ENCODE measurements at regions of chr16 and their contacts with region 1.

Region 1: DNA sequence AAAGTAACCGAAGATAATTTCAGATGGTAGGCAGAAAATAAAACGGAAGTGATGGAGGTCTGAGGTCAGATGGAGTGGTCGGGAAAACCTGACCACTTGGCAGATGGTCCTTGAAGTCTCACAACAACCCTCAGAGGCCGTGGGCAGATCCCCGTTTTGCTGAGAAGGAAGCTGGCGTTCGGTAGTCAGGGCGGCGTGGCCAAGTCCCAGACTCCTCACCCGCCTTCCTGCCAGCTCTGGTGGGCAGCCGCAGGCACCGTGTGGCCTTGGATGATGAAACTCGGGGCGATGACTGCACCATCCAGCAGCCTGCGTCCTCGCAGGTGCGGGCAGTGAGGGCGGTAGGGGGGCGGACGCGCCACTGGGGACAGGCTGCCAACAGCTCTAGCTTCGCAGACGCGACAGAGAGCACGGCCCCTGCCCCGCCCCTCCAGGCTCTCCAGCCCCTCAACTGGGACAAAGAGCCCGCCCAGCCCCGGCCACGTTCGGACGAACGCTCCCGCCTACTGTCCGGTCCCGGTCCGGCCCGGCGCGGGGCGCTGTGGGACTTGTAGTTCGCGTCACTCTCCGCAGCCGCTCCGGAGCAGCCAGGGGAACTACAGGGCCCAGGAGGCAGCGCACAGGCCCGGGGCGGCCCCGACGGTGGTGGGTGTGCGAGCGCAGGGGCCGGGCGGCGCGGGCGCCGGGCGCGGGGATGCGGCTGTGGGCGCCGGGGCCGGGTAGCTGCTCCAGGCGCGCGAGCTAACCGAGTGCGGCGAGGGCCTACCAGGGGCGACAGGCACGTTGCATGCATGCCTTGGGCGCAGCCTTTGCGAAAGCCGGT is at the start of gene GPT2:
- DNase-seq: peak; percentile 70
- H3K4me3 ChIP-seq: peak within 1 kb of the TSS; percentile 71
- H3K27me3 ChIP-seq: peaks cover 7% of the 10 kb centered on the region
- CTCF ChIP-seq: no peak
- polyA plus RNA-seq, gene GPT2: 22.3 and 34.1 TPM in 2 replicates

Region 2: DNA sequence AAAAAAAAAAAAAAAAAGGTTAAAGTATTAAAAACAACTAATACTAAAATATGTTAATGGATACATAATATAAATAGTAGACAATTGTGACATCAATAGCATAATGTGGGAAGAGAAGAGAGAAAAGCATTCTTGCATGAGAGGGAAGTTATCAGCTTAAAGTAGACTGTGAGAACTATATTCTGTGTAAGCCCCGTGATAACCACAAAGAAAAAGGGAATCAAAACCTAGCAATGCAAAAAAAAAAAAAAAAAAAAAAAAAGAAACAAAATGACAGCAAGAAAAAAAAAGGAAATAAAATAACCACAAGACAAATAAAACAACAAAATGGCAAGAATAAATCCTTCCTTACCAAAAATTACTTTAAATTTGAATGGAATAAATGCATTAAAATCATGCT is 96.0 kb before region 1 on chr16:
- CTCF ChIA-PET with region 1: no interaction called
- POLR2A ChIA-PET with region 1: interaction called, 12 read pairs
- DNase-seq: no peak
- H3K4me3 ChIP-seq: no peak overlapping the region
- H3K27me3 ChIP-seq: peaks cover 3% of the 10 kb centered on the region; the same call in 1 of the 2 replicates
- CTCF ChIP-seq: no peak

Region 3: GRCh38 chr16:46830902-46831647 is 52.8 kb before region 1 on chr16 and contains the start of gene C16orf87:
- CTCF ChIA-PET with region 1: no interaction called
- POLR2A ChIA-PET with region 1: interaction called, 12 read pairs
- DNase-seq: peak; percentile 54
- H3K4me3 ChIP-seq: peak within 1 kb of the TSS; percentile 77
- H3K27me3 ChIP-seq: no peaks in the 10 kb centered on the region; the same call in 1 of the 2 replicates
- CTCF ChIP-seq: no peak
- polyA plus RNA-seq, gene C16orf87: 2.1 and 5.8 TPM in 2 replicates

Region 4: GRCh38 chr16:46871587-46871986 is 12.3 kb before region 1 on chr16:
- CTCF ChIA-PET with region 1: no interaction called
- POLR2A ChIA-PET with region 1: no interaction called
- DNase-seq: no peak
- H3K4me3 ChIP-seq: no peak overlapping the region
- H3K27me3 ChIP-seq: 0 out of 2 replicates have a peak, but pooled peaks cover 2% of the 10 kb centered on the region
- CTCF ChIP-seq: no peak

Region 5: GRCh38 chr16:47028767-47029377 is 145.0 kb after region 1 on chr16:
- CTCF ChIA-PET with region 1: no interaction called
- POLR2A ChIA-PET with region 1: no interaction called
- DNase-seq: no peak
- H3K4me3 ChIP-seq: no peak overlapping the region
- H3K27me3 ChIP-seq: no peaks in the 10 kb centered on the region
- CTCF ChIP-seq: no peak

Measured in BJ (cell line).